Colonic mucosa (tissue), 4 donors: ENCODE measurements at regions of chr16 and their contacts with region 1.

Region 1: GRCh38 chr16:4183237-4184036 is 58.4 kb downstream of the SRL start:
- DNase-seq: peak; percentile 91
- H3K4me3 ChIP-seq: peak overlapping the region; percentile 75
- H3K27ac ChIP-seq: peak overlapping the region; percentile 92
- H3K4me1 ChIP-seq: no peaks in the 10 kb centered on the region
- H3K27me3 ChIP-seq: no peaks in the 10 kb centered on the region
- CTCF ChIP-seq: no peak

Region 2: DNA sequence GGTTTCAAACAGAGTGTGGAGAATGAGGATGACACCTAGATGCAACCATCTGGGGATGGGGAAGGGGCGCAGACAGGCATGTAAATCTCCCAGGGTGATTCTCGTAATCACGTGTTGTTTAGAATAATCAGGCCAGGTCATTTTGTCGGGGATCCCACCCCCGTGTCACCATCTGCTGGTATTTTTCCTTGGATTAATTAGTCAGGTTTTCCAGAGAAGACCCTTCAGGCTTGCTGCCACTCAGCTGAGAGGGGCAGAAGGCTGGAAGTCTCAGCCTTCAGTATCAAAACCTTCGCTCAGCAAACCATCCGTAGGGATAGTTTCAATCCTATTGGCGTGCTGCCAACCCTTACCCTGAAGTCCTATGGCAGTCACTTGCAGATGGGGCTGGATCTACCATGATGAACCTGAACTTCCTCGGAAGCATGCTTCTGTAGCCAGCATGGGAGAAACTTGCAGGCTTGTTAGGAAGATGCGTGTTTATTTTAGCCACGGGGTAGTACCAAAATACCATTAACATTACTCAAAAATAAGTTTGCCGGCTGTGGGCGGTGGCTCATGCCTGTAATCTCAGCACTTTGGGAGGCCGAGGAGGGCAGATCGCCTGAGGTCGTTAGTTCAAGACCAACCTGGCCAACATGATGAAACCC is 59.7 kb before region 1 on chr16:
- intact Hi-C with region 1: loop called (anchors 5 kb)
- DNase-seq: no peak
- H3K4me3 ChIP-seq: no peak overlapping the region
- H3K27ac ChIP-seq: no peak overlapping the region
- H3K4me1 ChIP-seq: no peaks in the 10 kb centered on the region
- H3K27me3 ChIP-seq: no peaks in the 10 kb centered on the region
- CTCF ChIP-seq: no peak